ENCODE measurements at regions of chr10 and their contacts with region 1.

Region 1: GRCh38 chr10:125060826-125061556 is 99.4 kb downstream of the CTBP2 start:
- DNase-seq: peak; percentile 40
- ATAC-seq: peak; percentile 84
- H3K4me3 ChIP-seq: no peak overlapping the region
- H3K27ac ChIP-seq: no peak overlapping the region
- H3K4me1 ChIP-seq: peaks cover 39 to 55% of the 10 kb centered on the region in 2 experiments
- H3K27me3 ChIP-seq: no peaks in the 10 kb centered on the region
- CTCF ChIP-seq: peak; percentile 85 to 96 (median 91)
- POLR2A ChIP-seq: no peak
- RAD21 ChIP-seq: peak; percentile 86

Region 2: GRCh38 chr10:124530215-124530665 is 530.8 kb before region 1 on chr10:
- CTCF ChIA-PET with region 1: no interaction called
- POLR2A ChIA-PET with region 1: no interaction called
- RAD21 ChIA-PET with region 1: no interaction called
- intact Hi-C with region 1: loop called (anchors 5 kb)
- DNase-seq: peak; percentile 62
- ATAC-seq: peak; percentile 88
- H3K4me3 ChIP-seq: no peak overlapping the region
- H3K27ac ChIP-seq: no peak overlapping the region
- H3K4me1 ChIP-seq: peaks cover under 1 to 24% of the 10 kb centered on the region in 2 experiments; a peak in 3 of 4 replicates
- H3K27me3 ChIP-seq: no peaks in the 10 kb centered on the region
- CTCF ChIP-seq: peak; percentile 92 to 98 (median 98)
- POLR2A ChIP-seq: no peak
- RAD21 ChIP-seq: peak; percentile 99

Region 3: DNA sequence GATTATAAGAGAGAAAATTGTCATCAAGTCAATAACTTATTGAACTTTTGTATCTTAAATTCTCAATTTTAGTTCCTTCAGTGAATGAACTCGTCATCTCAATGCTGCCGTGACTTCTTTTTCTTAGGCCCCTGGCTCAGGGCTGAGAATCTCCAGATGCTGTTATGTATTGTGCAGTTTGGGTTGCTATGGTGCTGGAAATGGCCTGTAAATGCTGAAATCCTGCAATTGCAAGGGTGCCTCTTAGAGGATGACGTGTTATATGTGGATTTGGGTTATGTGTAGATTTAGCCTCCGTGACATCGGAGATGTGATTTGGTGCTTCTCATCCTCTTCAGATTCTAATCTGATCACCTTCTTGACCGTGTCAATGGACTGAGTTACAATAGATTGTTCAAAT is 174.8 kb before region 1 on chr10:
- CTCF ChIA-PET with region 1: no interaction called
- POLR2A ChIA-PET with region 1: no interaction called
- RAD21 ChIA-PET with region 1: no interaction called
- intact Hi-C with region 1: no loop called
- DNase-seq: no peak
- ATAC-seq: no peak
- H3K4me3 ChIP-seq: no peak overlapping the region
- H3K27ac ChIP-seq: no peak overlapping the region
- H3K4me1 ChIP-seq: peaks cover 2 to 4% of the 10 kb centered on the region in 2 experiments; a peak in 3 of 4 replicates
- H3K27me3 ChIP-seq: no peaks in the 10 kb centered on the region
- CTCF ChIP-seq: no peak
- POLR2A ChIP-seq: no peak
- RAD21 ChIP-seq: no peak

Region 4: GRCh38 chr10:124992462-124993344 is 68.3 kb before region 1 on chr10:
- CTCF ChIA-PET with region 1: interaction called, 12 read pairs
- POLR2A ChIA-PET with region 1: no interaction called
- RAD21 ChIA-PET with region 1: interaction called in 1 of 2 experiments, 3 read pairs
- intact Hi-C with region 1: no loop called
- DNase-seq: peak; percentile 43
- ATAC-seq: peak; percentile 86
- H3K4me3 ChIP-seq: no peak overlapping the region
- H3K27ac ChIP-seq: no peak overlapping the region
- H3K4me1 ChIP-seq: no peaks in the 10 kb centered on the region
- H3K27me3 ChIP-seq: no peaks in the 10 kb centered on the region
- CTCF ChIP-seq: peak; percentile 49 to 68 (median 66); a peak in 5 of 6 replicates
- POLR2A ChIP-seq: no peak
- RAD21 ChIP-seq: peak; percentile 78

Region 5: GRCh38 chr10:125084191-125084613 is 23.2 kb after region 1 on chr10:
- CTCF ChIA-PET with region 1: interaction called, 18 read pairs
- POLR2A ChIA-PET with region 1: no interaction called
- RAD21 ChIA-PET with region 1: no interaction called
- intact Hi-C with region 1: no loop called
- DNase-seq: peak; percentile 85
- ATAC-seq: peak; percentile 94
- H3K4me3 ChIP-seq: peak overlapping the region in 1 of 2 experiments; percentile 27; a peak in 2 of 4 replicates
- H3K27ac ChIP-seq: peak overlapping the region; percentile 62
- H3K4me1 ChIP-seq: peaks cover 49 to 73% of the 10 kb centered on the region in 2 experiments
- H3K27me3 ChIP-seq: no peaks in the 10 kb centered on the region
- CTCF ChIP-seq: peak in 2 of 3 experiments; percentile 49 to 60; a peak in 4 of 6 replicates
- POLR2A ChIP-seq: no peak
- RAD21 ChIP-seq: no peak

Region 6: GRCh38 chr10:125123476-125124114 is 62.6 kb after region 1 on chr10:
- CTCF ChIA-PET with region 1: no interaction called
- POLR2A ChIA-PET with region 1: interaction called, 4 read pairs
- RAD21 ChIA-PET with region 1: no interaction called
- intact Hi-C with region 1: loop called (anchors 5 kb)
- DNase-seq: peak; percentile 96
- ATAC-seq: peak; percentile 84
- H3K4me3 ChIP-seq: peak overlapping the region; percentile 0 to 42
- H3K27ac ChIP-seq: peak overlapping the region; percentile 80
- H3K4me1 ChIP-seq: peaks cover 66 to 84% of the 10 kb centered on the region in 2 experiments
- H3K27me3 ChIP-seq: no peaks in the 10 kb centered on the region
- CTCF ChIP-seq: no peak
- POLR2A ChIP-seq: no peak
- RAD21 ChIP-seq: no peak

Region 7: DNA sequence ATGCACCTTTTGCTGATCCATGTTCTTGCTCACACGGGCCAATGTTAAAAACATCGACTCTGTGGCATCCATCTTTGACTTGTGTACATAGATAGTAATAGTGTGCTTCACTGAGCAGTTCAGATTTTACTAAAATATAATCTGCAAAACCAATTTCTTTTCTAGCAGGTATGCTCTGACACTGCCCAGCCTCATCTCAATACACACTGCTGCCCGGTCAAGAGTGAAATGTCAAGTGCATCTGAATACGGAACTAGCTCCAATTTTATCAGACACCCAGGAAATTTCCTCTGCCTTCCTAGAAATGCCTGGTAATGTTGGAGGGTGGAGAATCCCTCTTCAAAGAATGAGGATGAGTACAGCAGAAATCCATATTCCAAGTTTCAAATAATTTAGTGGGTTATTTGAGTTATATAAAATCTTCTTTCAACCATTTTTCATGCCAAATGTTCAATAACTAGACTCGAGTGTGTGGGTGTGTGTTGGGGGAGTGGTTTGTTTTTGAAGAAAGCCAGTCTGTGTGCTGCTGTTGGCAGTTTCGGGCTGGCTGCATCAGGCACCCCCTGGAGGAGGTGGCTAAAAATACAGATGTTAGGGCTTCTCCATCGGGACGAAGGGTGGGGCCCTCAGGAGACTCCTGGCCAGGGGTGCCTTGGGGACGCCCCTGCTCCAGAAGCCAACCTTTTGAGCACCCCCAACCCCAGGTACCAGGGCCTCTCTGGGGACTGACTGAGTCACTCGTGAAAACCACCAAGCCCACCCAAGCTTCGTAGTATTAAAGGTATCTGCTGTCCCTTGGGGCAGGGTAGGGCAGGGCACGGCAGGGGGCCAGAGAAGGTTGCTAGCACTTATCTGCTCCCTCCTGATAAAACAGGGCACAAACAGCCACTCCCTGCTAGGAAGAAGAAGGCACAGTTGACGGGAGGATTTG is 84.0 kb after region 1 on chr10:
- CTCF ChIA-PET with region 1: no interaction called
- POLR2A ChIA-PET with region 1: no interaction called
- RAD21 ChIA-PET with region 1: no interaction called
- intact Hi-C with region 1: loop called (anchors 5 kb)
- DNase-seq: peak; percentile 61
- ATAC-seq: peak; percentile 93
- H3K4me3 ChIP-seq: peak overlapping the region in 1 of 2 experiments; percentile 5; a peak in 1 of 4 replicates
- H3K27ac ChIP-seq: peak overlapping the region; percentile 6; the same call in 1 of the 2 replicates
- H3K4me1 ChIP-seq: peaks cover 45 to 62% of the 10 kb centered on the region in 2 experiments
- H3K27me3 ChIP-seq: no peaks in the 10 kb centered on the region
- CTCF ChIP-seq: peak; percentile 73 to 78 (median 76); a peak in 5 of 6 replicates
- POLR2A ChIP-seq: no peak
- RAD21 ChIP-seq: peak; percentile 80

Measured in HCT116 (cell line).